Ovary (tissue), 10 donors: ENCODE measurements at regions of chr1 and their contacts with region 1.

Region 1: GRCh38 chr1:44213222-44214112 is at the start of gene DMAP1:
- DNase-seq: peak; percentile 75 to 90 (median 82)
- H3K4me3 ChIP-seq: peak within 1 kb of the TSS; percentile 72
- H3K27ac ChIP-seq: peak within 1 kb of the TSS in 1 of 2 donors; percentile 82
- H3K4me1 ChIP-seq: peaks cover 9% of the 10 kb centered on the region
- H3K27me3 ChIP-seq: no peaks in the 10 kb centered on the region
- CTCF ChIP-seq: peak in 1 of 3 donors; percentile 17
- EP300 ChIP-seq: no peak
- POLR2A ChIP-seq: peak; percentile 29
- total RNA-seq, gene DMAP1: 35.8 to 46.9 (median 43.6) TPM

Region 2: DNA sequence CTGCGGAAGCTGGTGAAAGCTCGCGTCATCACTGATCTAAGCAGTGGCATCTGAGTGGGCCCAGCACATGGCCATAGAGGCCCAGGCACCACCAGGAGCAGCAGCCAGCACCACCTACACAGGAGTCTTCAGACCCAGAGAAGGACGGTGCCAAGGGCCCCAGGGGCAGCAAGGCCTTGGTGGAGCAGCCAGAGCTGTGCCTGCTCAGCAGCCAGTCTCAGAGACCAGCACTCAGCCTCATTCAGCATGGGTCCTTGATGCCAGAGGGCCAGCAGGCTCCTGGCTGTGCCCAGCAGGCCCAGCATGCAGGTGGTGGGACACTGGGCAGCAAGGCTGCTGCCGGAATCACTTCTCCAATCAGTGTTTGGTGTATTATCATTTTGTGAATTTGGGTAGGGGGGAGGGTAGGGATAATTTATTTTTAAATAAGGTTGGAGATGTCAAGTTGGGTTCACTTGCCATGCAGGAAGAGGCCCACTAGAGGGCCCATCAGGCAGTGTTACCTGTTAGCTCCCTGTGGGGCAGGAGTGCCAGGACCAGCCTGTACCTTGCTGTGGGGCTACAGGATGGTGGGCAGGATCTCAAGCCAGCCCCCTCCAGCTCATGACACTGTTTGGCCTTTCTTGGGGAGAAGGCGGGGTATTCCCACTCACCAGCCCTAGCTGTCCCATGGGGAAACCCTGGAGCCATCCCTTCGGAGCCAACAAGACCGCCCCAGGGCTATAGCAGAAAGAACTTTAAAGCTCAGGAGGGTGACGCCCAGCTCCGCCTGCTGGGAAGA is 283.1 kb before region 1 on chr1:
- intact Hi-C with region 1: no loop called
- DNase-seq: no peak
- H3K4me3 ChIP-seq: no peak overlapping the region
- H3K27ac ChIP-seq: no peak overlapping the region
- H3K4me1 ChIP-seq: peaks cover 4% of the 10 kb centered on the region
- H3K27me3 ChIP-seq: no peaks in the 10 kb centered on the region
- CTCF ChIP-seq: no peak
- EP300 ChIP-seq: no peak
- POLR2A ChIP-seq: no peak

Region 3: GRCh38 chr1:44652445-44653106 is 439.1 kb after region 1 on chr1:
- intact Hi-C with region 1: loop called in 3 of 4 experiments (anchors 5 to 10 kb)
- DNase-seq: peak; percentile 63 to 87 (median 82)
- H3K4me3 ChIP-seq: no peak overlapping the region
- H3K27ac ChIP-seq: no peak overlapping the region
- H3K4me1 ChIP-seq: no peaks in the 10 kb centered on the region
- H3K27me3 ChIP-seq: no peaks in the 10 kb centered on the region
- CTCF ChIP-seq: peak; percentile 59 to 91 (median 84)
- EP300 ChIP-seq: no peak
- POLR2A ChIP-seq: no peak